Right cardiac atrium (tissue), 5 donors: ENCODE measurements at regions of chr2 and their contacts with region 1.

Region 1: DNA sequence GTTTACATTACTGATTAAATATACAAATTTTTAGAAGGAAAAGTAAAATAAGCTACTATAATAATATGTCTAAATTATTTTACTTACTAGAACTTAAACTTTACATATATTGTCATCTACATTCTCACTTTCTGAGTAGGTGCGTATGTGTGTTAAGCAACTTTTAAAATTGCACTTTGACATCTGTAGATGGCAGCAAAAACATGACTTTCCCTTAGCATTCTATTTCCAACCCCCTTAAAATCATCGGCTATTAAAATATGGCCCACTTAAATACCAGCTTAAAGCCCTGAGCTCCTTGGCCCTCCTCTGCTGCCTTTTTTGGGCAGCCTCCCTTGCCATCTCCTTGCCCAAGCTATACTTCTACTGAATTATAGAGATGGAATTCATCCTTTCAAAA is 78.0 kb downstream of the UPP2 start:
- DNase-seq: no peak
- ATAC-seq: peak; percentile 51 to 59
- H3K4me3 ChIP-seq: no peak overlapping the region
- H3K27ac ChIP-seq: no peak overlapping the region
- H3K4me1 ChIP-seq: no peaks in the 10 kb centered on the region
- H3K27me3 ChIP-seq: no peaks in the 10 kb centered on the region

Region 2: DNA sequence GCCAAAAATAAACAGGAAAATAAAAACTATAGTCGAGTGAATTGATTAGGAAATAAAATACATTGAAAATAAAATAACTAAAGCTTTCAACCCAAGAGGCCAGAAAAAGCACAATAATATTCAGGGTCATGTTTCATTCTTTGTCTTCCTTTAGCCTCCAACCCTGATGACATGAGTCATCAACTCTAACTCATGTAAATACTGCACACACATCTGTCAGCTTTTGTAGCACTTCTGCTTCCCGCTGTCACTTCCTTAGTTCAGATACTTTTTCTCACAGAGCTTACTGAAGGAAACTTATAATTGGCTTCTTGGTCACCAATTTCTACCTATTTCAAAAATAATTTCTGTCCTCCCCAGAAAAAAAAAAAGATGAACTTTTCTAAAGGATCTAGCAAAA is 34.8 kb after region 1 on chr2:
- intact Hi-C with region 1: no loop called
- DNase-seq: no peak
- ATAC-seq: peak; percentile 54 to 56
- H3K4me3 ChIP-seq: no peak overlapping the region
- H3K27ac ChIP-seq: no peak overlapping the region
- H3K4me1 ChIP-seq: no peaks in the 10 kb centered on the region
- H3K27me3 ChIP-seq: no peaks in the 10 kb centered on the region

Region 3: DNA sequence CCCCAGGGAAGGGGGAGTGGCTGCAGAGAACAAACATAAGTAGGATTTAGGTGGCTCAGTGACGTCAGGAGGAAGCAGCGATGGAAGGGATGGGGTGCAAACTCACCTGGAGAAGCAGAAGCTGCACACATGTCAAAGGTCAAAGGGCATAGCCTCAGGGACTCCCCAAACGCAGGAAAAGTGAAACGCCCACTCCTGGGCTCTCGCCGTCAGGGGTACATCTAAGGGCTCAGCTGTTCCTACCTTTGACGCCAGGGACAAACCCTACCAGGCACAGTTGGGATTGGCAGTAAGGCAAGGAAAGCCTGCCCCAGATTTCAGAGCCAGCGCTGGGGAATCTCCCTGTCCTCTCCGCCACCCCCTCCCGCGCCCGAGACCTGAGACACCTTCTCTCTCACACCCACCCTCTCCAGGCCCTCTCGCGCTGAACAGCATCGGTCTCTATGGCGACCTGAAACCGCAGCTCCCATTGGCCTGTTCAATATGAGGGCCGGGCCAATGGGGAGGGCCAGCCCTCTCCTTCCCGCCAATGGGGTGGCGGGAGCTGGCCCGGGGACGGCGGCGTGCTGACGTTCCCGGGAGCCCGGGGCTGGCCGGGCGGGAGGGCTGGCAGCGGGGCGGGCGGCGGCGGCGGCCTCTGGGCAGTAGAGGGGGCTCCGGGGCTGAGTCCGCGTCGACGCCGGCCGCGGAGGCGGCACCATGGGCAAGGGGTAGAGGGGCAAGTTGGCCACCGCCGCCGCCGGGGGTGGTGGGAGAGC is 276.8 kb after region 1 on chr2 and contains the starts of genes CCDC148 and PKP4:
- intact Hi-C with region 1: loop called in 1 of 4 experiments (anchors 10 kb)
- DNase-seq: peak; percentile 91 to 96 (median 95)
- ATAC-seq: peak; percentile 97
- H3K4me3 ChIP-seq: peak within 1 kb of the TSS; percentile 51
- H3K27ac ChIP-seq: peak within 1 kb of the TSS; percentile 53
- H3K4me1 ChIP-seq: no peaks in the 10 kb centered on the region
- H3K27me3 ChIP-seq: no peaks in the 10 kb centered on the region
- total RNA-seq, gene CCDC148: 0.70 to 2.4 (median 1.7) TPM
- total RNA-seq, gene PKP4: 49.2 to 74.8 (median 62.7) TPM